Common myeloid progenitor, CD34-positive (primary cell): ENCODE measurements at regions of chr17 and their contacts with region 1.

Region 1: GRCh38 chr17:48409607-48410006 is 20.4 kb downstream of the SKAP1 start:
- DNase-seq: no peak
- H3K4me3 ChIP-seq: no peak overlapping the region
- H3K27ac ChIP-seq: no peak overlapping the region
- H3K4me1 ChIP-seq: peaks cover 0 to 10% (median 3%) of the 10 kb centered on the region in 4 experiments
- H3K27me3 ChIP-seq: no peaks in the 10 kb centered on the region

Region 2: GRCh38 chr17:48420823-48421222 is 11.2 kb after region 1 on chr17:
- CTCF ChIA-PET with region 1: interaction called, 15 read pairs
- POLR2A ChIA-PET with region 1: no interaction called
- DNase-seq: no peak
- H3K4me3 ChIP-seq: no peak overlapping the region
- H3K27ac ChIP-seq: no peak overlapping the region
- H3K4me1 ChIP-seq: peaks cover 0 to 2% (median under 1%) of the 10 kb centered on the region in 4 experiments
- H3K27me3 ChIP-seq: no peaks in the 10 kb centered on the region

Region 3: DNA sequence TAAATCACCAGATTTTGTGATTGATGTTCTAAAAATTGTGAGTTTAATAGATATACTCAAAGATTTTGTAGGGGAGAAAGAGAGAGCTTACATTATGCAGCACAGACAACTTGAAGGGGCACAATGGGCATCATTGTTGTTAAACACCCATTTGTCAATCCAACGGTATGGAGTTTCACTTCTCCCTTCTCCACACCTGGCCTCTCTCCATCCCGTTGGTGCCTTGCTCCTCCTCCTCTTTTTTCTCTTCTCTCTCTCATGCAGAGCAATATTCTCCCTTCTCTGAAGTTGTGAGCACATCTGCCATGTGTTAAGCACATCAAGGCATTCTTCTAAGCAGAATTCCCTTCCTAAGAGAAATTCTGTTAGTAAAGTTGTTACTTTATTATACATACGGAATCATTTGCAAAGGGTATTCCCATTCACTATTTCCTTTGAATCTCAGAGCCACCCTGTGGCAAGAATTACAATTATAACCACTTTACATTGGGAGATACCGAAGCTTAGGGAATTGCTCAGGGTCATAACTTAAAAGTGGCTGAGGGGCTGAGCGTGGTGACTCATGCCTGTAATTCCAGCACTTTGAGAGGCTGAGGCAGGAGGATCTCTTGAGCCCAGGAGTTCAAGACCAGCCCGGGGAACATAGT is 60.9 kb after region 1 on chr17:
- CTCF ChIA-PET with region 1: no interaction called
- POLR2A ChIA-PET with region 1: no interaction called
- DNase-seq: no peak
- H3K4me3 ChIP-seq: no peak overlapping the region
- H3K27ac ChIP-seq: no peak overlapping the region
- H3K4me1 ChIP-seq: peaks cover 0 to 13% (median 7%) of the 10 kb centered on the region in 4 experiments
- H3K27me3 ChIP-seq: no peaks in the 10 kb centered on the region